ENCODE measurements at regions of chr4 and their contacts with region 1.

Region 1: DNA sequence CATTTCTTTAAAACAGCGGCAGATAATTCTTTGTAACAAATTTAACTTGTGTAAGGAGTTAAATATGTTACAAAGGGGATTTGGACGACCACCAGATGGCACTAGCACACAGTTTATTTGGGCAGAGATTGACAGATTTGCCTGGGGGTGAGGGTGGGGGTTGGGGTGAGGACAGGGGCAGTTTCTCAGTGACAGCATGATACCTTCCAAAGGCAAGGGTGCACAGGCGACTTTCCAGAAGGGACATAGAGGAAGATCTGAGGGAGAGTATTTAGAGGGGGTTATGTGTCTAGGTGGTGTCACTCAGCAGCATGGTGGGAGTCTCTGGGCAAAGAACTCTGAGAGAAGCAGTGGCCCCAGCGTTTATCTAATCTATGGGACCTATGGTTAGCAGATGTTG is 9.6 kb upstream of the TMA16 start:
- DNase-seq: no peak
- H3K4me3 ChIP-seq: no peak overlapping the region
- H3K27ac ChIP-seq: no peak overlapping the region
- H3K4me1 ChIP-seq: no peaks in the 10 kb centered on the region
- H3K27me3 ChIP-seq: peaks cover 0 to 11% (median 0%) of the 10 kb centered on the region in 4 donors
- CTCF ChIP-seq: peak; percentile 38 to 59 (median 46)
- EP300 ChIP-seq: no peak
- POLR2A ChIP-seq: no peak

Region 2: DNA sequence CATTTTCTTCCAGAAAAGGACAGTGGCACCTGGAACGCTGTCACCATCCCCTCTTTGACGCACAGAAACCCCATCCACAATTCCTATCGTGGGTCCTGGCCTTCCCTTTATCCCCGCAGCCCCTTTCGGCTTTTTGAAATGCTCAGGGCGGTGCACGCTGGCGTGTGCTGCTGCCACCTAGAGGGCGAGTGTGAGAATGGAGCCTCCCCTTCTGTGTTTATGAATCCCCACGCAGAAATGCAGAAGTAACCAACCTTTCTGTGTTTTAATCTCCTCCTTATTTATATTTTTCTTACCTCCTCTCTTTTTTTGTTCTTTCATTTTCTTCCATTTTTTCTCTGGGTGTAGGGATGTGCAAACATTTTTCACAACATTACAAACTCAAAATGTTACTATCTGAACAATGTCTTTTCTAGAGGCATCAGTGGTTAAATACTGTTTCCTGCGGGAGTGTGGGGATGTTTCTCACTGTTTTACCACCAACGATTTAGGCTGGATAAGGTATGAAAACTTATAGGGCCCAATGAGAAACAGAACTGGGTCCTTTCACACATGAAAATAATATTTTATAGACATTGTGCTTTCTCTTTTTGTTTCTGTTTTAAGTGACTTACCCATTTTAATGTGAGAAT is 59.6 kb after region 1 on chr4:
- intact Hi-C with region 1: loop called (anchors 5 kb)
- DNase-seq: no peak
- H3K4me3 ChIP-seq: peak overlapping the region in 3 of 4 donors; percentile 26 to 48 (median 33)
- H3K27ac ChIP-seq: no peak overlapping the region
- H3K4me1 ChIP-seq: peaks cover 0 to 7% (median 3%) of the 10 kb centered on the region in 4 donors
- H3K27me3 ChIP-seq: no peaks in the 10 kb centered on the region
- CTCF ChIP-seq: peak; percentile 67 to 94 (median 81)
- EP300 ChIP-seq: no peak
- POLR2A ChIP-seq: no peak